BJ (cell line): ENCODE measurements at regions of chr2 and their contacts with region 1.

Region 1: DNA sequence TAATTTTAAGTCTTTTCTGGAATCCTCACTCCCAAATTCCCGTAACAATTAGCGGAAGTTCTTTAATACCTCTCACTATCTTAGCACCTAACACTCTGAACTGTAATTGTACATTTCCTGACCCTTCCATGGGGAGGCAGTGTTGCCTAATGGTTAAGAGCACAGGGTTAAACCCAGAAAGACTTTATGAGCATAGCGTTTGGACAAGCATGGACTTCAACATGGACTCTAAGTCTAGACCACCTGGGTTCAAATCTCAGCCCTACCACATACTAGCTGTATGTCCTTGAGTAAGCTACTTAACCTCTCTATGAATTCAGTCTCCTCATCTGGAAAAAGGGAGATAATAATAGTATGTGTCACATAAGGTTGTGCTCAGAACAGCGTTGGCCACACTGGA is 13.0 kb downstream of the ANTXR1 start:
- DNase-seq: no peak
- H3K4me3 ChIP-seq: no peak overlapping the region
- H3K27me3 ChIP-seq: no peaks in the 10 kb centered on the region
- CTCF ChIP-seq: peak; percentile 41

Region 2: DNA sequence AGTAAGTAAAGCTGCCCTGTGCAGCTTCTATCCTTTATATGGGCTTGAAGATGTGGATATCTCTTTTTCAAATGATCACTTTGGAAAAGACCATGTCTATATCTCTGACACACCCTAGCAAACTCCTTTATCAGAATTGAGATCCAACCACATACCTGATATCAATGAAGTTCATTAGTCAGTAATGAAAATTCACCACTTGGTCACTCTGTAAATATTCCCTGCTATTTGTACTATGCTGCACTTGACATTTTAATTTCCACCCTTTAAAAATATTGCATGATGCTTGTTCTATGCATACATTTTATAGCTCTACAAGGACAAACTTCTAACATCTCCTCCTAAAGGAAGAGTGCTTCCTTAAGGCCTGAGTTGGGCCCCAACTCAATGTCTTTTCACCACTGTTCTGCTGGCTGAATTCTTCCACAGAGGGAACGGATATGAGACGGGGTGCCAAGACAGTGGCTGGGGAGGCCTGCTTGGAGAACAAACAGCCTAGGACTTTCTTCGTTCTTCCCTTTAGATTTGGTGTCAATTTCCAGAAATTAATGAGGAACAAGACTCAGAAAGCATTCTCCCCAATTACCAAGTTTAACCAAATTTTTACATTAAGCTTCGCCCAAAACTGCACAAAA is 73.0 kb before region 1 on chr2 and contains the start of gene GKN2:
- CTCF ChIA-PET with region 1: no interaction called
- POLR2A ChIA-PET with region 1: interaction called, 10 read pairs
- DNase-seq: no peak
- H3K4me3 ChIP-seq: no peak within 1 kb of the TSS
- H3K27me3 ChIP-seq: no peaks in the 10 kb centered on the region
- CTCF ChIP-seq: no peak
- polyA plus RNA-seq, gene GKN2: not detected in 2 replicates